Psoas muscle (tissue), 8 donors: ENCODE measurements at regions of chr14 and their contacts with region 1.

Region 1: DNA sequence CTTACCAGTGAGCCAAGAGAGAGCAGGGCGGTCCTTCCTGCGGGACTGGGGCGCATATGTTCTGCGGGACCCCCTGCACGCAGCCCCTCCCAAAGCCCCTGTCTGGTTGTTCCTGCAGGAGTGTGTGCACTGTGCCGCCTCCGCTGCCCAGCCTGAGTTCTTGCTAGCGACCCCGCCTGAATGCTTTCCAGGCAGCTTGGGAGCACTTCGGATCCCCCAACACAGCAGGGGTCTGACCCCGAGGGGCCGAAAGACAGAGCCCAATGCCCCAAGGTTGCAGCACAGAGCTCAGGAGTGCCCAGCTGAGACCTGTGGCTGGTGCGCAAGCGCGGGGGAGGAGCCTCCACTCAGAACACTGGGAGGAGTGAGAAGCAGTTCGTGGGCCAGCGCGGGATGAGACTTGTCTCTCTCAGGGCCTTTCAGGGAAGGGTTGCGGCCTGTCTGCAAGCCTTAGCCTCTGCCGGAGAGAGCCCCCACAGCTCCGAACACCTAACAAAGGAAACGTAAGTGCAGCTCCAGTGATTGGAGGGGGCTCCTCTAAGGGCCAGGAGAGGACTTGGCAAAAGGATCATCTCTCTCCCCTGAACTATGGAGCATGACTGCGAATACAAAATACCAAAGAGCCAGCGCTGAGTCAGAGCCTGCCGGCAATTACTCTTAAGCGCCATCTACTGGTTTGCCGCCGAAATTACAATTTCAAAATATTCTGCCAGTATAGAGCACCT is 50.5 kb downstream of the GTF2A1 start:
- DNase-seq: peak; percentile 94 to 97
- ATAC-seq: peak; percentile 99
- H3K4me3 ChIP-seq: peak overlapping the region; percentile 89
- H3K27ac ChIP-seq: peak overlapping the region; percentile 89
- H3K4me1 ChIP-seq: peaks cover 16% of the 10 kb centered on the region
- H3K27me3 ChIP-seq: no peaks in the 10 kb centered on the region
- CTCF ChIP-seq: peak; percentile 89

Region 2: DNA sequence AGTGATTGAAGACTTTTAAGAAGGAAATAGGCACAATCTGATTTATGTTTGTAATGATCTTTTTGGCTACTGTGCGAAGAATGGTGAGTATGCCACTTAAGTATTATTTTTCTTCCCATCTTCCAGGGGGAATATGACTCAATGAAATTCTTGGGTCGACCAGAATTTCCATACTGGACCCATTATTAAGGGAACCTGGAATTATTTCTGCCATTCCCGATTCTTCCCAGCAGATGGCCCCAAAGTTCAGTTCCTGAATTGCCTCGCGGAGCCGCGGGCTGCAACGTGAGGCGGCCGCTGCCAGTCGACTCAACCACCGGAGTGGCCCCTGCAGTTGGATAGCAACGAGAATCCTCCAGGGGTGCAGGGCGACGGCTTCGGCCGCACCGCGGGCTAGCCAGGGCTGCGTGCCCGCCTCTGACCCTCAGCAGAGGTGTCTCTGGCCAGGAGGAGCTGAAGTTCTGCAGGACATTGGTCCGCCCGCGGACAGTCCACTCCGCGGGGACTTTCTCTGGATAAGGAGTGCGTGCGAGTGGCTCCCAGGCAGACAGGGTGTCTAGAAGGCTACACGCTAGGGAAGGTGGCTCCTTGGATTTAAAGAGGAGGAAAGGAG is 215.5 kb before region 1 on chr14:
- intact Hi-C with region 1: loop called (anchors 2 to 5 kb)
- DNase-seq: peak; percentile 80 to 86
- ATAC-seq: peak; percentile 93 to 98 (median 96)
- H3K4me3 ChIP-seq: peak overlapping the region; percentile 73
- H3K27ac ChIP-seq: no peak overlapping the region
- H3K4me1 ChIP-seq: peaks cover 5% of the 10 kb centered on the region
- H3K27me3 ChIP-seq: no peaks in the 10 kb centered on the region
- CTCF ChIP-seq: peak; percentile 84

Region 3: DNA sequence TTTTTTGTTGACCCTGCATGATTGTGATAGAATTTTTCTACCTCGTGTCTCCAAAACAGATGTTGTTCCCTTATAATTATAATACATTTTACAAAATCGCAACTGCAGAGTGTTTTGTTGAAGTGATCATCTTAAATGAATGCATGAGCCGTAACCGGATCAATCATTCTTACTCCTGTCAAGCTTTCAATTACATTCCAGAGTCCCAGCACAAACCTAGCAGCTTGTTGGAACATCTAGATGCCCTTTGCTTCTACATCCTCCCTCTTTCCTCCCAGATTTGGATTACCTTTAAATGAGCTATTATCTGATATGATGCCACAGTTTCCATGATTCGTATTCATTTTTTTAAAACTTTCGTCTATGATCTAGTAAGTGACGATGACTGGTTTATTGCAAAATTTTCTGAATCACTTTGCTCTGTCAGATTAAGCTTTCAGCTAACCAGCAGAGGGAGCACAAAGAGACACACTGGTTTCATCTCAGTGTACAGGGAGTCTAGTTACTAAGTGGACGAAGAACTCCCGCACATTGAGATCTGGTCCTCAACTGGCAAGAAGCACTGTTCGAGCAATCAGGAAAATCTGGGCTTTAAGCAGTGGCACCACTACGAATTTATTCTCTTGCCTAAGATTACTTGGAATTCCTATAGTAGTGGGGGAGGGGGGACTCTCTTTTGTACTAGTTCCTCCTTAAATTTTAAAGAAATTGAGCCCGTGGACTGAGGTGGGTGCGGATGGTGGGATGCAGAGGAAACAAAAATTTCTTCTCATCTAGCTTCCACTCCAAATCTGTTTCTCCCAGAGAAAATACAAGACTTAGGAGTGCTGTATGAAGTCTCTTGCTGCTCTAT is 174.0 kb before region 1 on chr14:
- intact Hi-C with region 1: loop called (anchors 1 to 5 kb)
- DNase-seq: no peak
- ATAC-seq: peak; percentile 85 to 99 (median 96)
- H3K4me3 ChIP-seq: peak overlapping the region; percentile 33
- H3K27ac ChIP-seq: no peak overlapping the region
- H3K4me1 ChIP-seq: no peaks in the 10 kb centered on the region
- H3K27me3 ChIP-seq: no peaks in the 10 kb centered on the region
- CTCF ChIP-seq: peak; percentile 71